CD4-positive, alpha-beta T cell (primary cell): ENCODE measurements at regions of chr19 and their contacts with region 1.

Region 1: DNA sequence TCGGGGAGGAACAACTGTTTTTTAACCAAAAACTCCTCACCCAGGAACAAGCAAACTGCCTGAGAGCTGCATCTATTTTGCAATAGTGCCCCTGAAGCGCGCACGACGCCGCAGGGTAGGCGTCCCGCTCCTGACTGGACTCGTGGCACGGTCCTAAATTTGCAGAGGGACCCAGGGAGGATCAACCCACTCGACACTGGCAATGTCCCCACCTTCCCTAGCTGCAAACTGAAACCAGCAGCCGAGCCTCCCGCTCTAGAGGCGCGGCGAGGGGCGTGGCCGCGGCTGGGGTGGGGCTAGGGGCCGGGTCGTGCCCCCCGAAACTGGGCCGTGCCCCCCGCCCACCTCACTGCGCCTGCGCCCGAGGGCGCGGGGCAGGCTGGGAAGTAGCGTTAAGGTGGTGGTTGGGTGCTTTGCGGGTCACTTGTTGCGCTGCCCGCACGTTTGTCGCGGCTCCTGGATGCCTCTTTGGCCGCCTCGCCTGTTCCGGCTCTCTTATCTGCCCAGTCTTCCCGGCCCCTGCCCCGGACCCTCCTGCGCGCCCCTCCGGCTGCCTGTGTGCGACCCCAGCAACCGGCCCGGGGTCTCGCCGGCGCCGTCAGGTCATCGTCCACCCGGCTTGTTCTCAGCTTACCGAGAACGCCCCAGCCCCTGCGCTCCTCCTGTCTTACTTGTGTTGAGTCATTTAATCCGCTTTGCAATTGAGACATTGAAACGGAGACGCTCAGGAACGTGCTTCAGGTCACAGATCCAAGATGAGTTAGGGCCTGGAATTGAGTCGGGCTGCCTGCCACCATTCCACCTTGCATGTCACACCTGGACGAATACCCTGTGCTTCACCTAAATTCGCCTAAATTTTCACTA is 37.9 kb upstream of the LSM14A start:
- DNase-seq: peak; percentile 68 to 97 (median 91)
- ATAC-seq: peak; percentile 92
- H3K4me3 ChIP-seq: peak overlapping the region; percentile 67
- H3K4me3 Mint-ChIP-seq: peak overlapping the region; percentile 97
- H3K27ac ChIP-seq: peak overlapping the region; percentile 49 to 75
- H3K27ac Mint-ChIP-seq: peak overlapping the region; percentile 85
- H3K4me1 ChIP-seq: peaks cover 13% of the 10 kb centered on the region
- H3K4me1 Mint-ChIP-seq: peaks cover 3% of the 10 kb centered on the region
- H3K27me3 ChIP-seq: no peaks in the 10 kb centered on the region
- H3K27me3 Mint-ChIP-seq: no peaks in the 10 kb centered on the region
- CTCF ChIP-seq: no peak

Region 2: DNA sequence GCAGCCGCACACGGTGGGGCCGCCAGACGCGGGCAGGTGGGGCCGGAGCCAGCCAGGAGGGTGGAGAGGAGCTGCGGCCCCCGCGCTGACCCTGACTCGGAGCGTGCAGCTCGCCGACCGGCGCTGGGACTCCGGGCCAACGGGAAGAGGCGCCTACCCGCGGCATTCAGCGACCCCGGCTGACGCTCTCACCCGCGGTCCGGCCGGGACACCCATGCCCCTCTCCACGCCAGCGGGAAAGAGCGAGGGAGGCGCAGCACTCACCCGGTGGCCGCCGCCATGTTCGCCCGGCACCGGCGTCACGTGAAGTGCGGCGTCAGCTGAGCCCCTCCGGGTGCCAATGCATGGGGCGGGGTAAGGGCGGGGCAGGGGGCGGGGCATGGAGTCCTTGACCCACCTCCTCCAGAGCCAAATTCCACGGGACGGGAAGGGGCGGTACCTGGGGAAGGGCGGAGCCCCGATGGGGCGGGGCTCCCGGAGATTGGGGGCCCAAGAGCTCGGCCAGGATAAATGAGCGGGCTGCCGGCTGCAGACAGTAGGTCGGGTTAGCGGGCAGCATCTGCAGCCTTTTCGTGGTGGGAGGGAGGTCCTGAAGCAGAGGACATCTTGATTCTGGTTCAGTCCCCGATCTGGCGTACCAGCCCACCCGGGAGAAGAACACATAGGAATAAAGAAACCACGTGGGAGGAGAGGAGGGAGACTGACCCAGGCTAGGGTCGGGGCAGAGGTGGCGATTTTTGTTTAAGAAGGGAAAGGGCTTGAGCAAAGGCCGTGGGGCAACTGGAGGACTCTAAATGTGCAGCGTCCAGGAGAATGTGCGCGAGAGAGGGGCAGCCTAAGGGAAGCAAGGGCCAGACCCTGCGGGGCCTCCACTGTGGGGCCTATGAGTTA is 612.7 kb before region 1 on chr19 and contains the start of gene PEPD:
- CTCF ChIA-PET with region 1: no interaction called
- POLR2A ChIA-PET with region 1: no interaction called
- intact Hi-C with region 1: loop called in 1 of 2 experiments (anchors 10 kb)
- DNase-seq: peak; percentile 51 to 97 (median 77)
- ATAC-seq: peak; percentile 90
- H3K4me3 ChIP-seq: peak within 1 kb of the TSS; percentile 73
- H3K4me3 Mint-ChIP-seq: peak within 1 kb of the TSS; percentile 77
- H3K27ac ChIP-seq: no peak within 1 kb of the TSS
- H3K27ac Mint-ChIP-seq: peak within 1 kb of the TSS; percentile 34
- H3K4me1 ChIP-seq: peaks cover 25% of the 10 kb centered on the region
- H3K4me1 Mint-ChIP-seq: peaks cover 31% of the 10 kb centered on the region
- H3K27me3 ChIP-seq: no peaks in the 10 kb centered on the region
- H3K27me3 Mint-ChIP-seq: no peaks in the 10 kb centered on the region
- CTCF ChIP-seq: no peak
- total RNA-seq, gene PEPD: 17.5 to 23.0 TPM

Region 3: GRCh38 chr19:34041925-34042521 is 92.4 kb before region 1 on chr19:
- CTCF ChIA-PET with region 1: no interaction called
- POLR2A ChIA-PET with region 1: no interaction called
- intact Hi-C with region 1: no loop called
- DNase-seq: peak; percentile 51 to 79 (median 60)
- ATAC-seq: no peak
- H3K4me3 ChIP-seq: no peak overlapping the region
- H3K4me3 Mint-ChIP-seq: no peak overlapping the region
- H3K27ac ChIP-seq: no peak overlapping the region
- H3K27ac Mint-ChIP-seq: no peak overlapping the region
- H3K4me1 ChIP-seq: no peaks in the 10 kb centered on the region
- H3K4me1 Mint-ChIP-seq: no peaks in the 10 kb centered on the region
- H3K27me3 ChIP-seq: peaks cover 0 to 2% of the 10 kb centered on the region in 2 experiments
- H3K27me3 Mint-ChIP-seq: peaks cover 34% of the 10 kb centered on the region
- CTCF ChIP-seq: peak; percentile 83

Region 4: GRCh38 chr19:34171877-34172660 is 37.6 kb after region 1 on chr19 and contains the start of gene LSM14A:
- CTCF ChIA-PET with region 1: no interaction called
- POLR2A ChIA-PET with region 1: interaction called, 18 read pairs
- intact Hi-C with region 1: loop called in 1 of 2 experiments (anchors 2 kb)
- DNase-seq: peak; percentile 84 to 97 (median 91)
- ATAC-seq: peak; percentile 85
- H3K4me3 ChIP-seq: peak within 1 kb of the TSS; percentile 95
- H3K4me3 Mint-ChIP-seq: peak within 1 kb of the TSS; percentile 99
- H3K27ac ChIP-seq: peak within 1 kb of the TSS; percentile 97 to 98
- H3K27ac Mint-ChIP-seq: peak within 1 kb of the TSS; percentile 97
- H3K4me1 ChIP-seq: peaks cover 40% of the 10 kb centered on the region
- H3K4me1 Mint-ChIP-seq: peaks cover 50% of the 10 kb centered on the region
- H3K27me3 ChIP-seq: no peaks in the 10 kb centered on the region
- H3K27me3 Mint-ChIP-seq: no peaks in the 10 kb centered on the region
- CTCF ChIP-seq: no peak
- total RNA-seq, gene LSM14A: 210 to 217 TPM